Activated CD8-positive, alpha-beta T cell treated with anti-CD3 and anti-CD28 coated beads for 36 hours (primary cell): ENCODE measurements at regions of chrX and their contacts with region 1.

Region 1: DNA sequence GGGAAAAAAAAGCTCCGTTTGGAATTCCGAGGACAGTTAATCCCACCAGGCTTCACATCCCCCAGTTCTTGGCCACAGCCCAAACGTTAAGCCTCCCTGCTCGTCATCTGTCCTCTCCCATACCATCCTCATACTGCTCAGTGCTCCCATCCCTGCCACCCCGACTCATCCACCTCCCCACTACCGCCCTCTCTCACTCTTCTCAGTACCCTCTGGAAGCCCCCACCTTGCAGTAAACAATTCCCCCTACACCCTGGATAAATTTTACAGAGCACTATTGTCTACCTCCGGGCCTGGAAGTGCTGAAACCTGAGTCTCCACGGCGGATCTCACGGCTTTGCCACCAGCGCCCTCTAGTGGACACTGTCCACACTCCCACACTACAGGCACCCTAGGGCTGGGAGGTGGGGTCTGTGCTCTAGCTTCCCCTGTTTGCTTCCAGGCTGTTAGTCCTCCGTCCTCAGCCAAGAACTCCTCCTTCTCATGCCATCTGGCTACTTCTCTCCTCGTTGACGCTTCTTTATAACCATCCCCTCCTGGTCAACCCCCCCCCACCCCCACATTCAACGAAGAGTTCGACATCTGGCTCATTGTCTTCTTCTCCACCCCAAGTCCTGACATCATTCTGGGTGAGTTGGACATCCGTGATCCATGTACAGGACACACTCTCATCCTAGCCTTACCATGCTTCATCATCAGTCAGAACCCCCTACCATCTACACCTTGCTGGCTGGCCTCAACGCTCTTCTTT is 54.5 kb downstream of the RTL9 start:
- DNase-seq: peak; percentile 74
- ATAC-seq: peak; percentile 94
- H3K4me3 Mint-ChIP-seq: no peak overlapping the region
- H3K27ac Mint-ChIP-seq: no peak overlapping the region
- H3K4me1 Mint-ChIP-seq: peaks cover 2% of the 10 kb centered on the region
- H3K27me3 Mint-ChIP-seq: no peaks in the 10 kb centered on the region
- CTCF ChIP-seq: peak; percentile 66

Region 2: DNA sequence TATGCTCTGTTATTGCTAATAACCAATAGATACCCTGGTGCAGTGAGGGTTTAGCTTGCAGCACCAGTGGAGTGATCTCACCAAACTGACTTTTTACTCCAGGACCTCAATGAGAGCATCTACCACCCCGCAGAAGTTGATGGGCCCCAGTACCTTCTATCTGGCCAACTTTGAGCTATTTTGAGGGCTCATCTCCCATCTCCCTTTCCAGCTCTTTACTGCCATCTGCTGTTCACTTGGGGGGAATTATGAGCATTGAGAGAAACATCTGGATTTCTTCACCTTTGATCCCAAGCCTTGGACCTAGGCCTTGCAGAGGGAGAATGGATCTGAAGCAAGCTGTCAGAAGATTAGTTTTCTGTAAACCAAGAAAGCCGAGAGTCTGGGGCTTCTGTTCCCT is 266.6 kb before region 1 on chrX:
- CTCF ChIA-PET with region 1: interaction called, 449 read pairs
- POLR2A ChIA-PET with region 1: no interaction called
- intact Hi-C with region 1: no loop called
- DNase-seq: peak; percentile 23
- ATAC-seq: peak; percentile 76
- H3K4me3 Mint-ChIP-seq: no peak overlapping the region
- H3K27ac Mint-ChIP-seq: no peak overlapping the region
- H3K4me1 Mint-ChIP-seq: peaks cover 3% of the 10 kb centered on the region
- H3K27me3 Mint-ChIP-seq: no peaks in the 10 kb centered on the region
- CTCF ChIP-seq: no peak

Region 3: GRCh38 chrX:110167952-110168451 is 245.1 kb before region 1 on chrX:
- CTCF ChIA-PET with region 1: interaction called, 449 read pairs
- POLR2A ChIA-PET with region 1: no interaction called
- intact Hi-C with region 1: no loop called
- DNase-seq: peak; percentile 58
- ATAC-seq: peak; percentile 72
- H3K4me3 Mint-ChIP-seq: no peak overlapping the region
- H3K27ac Mint-ChIP-seq: no peak overlapping the region
- H3K4me1 Mint-ChIP-seq: no peaks in the 10 kb centered on the region
- H3K27me3 Mint-ChIP-seq: no peaks in the 10 kb centered on the region
- CTCF ChIP-seq: peak; percentile 49

Region 4: DNA sequence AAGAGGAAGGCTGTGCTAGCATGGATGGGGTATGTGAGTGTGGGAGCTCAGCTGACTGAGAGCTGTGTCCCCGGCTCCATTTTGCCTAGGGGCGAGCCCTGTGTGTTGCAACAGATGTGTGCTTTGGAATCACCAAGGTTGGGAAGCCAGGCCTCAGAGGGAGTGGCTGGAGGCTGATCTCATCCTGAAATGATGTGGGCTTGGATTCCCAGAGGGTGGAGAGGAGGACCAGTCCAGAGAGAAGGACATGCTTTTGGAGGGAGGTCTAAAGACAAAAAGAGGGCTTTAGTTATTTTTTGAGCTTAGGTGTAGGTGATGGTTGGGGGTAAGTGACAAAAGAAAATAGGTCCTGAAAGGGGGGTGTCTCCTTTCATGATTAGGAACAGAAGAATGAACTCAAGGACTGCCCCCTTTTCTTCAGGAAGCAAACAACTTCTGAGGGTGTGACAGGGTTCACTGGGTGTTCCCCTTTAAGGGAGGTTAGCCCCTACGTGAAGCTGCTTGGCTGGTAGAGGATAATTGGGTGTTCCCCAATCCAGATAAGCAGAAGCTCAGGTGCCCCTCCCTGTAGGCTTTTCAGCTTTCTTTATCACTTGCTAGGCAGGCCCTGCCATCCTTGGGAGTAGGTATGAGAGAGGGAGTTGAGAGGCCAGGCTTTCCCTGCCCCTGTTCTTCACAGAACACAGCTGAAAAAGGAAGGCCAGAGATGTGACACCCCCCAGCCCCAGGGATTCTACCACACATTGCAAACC is 10.5 kb before region 1 on chrX:
- CTCF ChIA-PET with region 1: interaction called, 14 read pairs
- POLR2A ChIA-PET with region 1: no interaction called
- intact Hi-C with region 1: no loop called
- DNase-seq: no peak
- ATAC-seq: no peak
- H3K4me3 Mint-ChIP-seq: no peak overlapping the region
- H3K27ac Mint-ChIP-seq: no peak overlapping the region
- H3K4me1 Mint-ChIP-seq: no peaks in the 10 kb centered on the region
- H3K27me3 Mint-ChIP-seq: peaks cover 2% of the 10 kb centered on the region
- CTCF ChIP-seq: no peak

Region 5: GRCh38 chrX:110561034-110561433 is 147.9 kb after region 1 on chrX:
- CTCF ChIA-PET with region 1: no interaction called
- POLR2A ChIA-PET with region 1: no interaction called
- intact Hi-C with region 1: no loop called
- DNase-seq: no peak
- ATAC-seq: no peak
- H3K4me3 Mint-ChIP-seq: no peak overlapping the region
- H3K27ac Mint-ChIP-seq: no peak overlapping the region
- H3K4me1 Mint-ChIP-seq: no peaks in the 10 kb centered on the region
- H3K27me3 Mint-ChIP-seq: no peaks in the 10 kb centered on the region
- CTCF ChIP-seq: no peak